Breast epithelium (tissue), 4 donors: ENCODE measurements at regions of chr9 and their contacts with region 1.

Region 1: GRCh38 chr9:33264473-33265177 is at the starts of genes BAG1 and CHMP5:
- DNase-seq: peak; percentile 99 to 100
- H3K4me3 ChIP-seq: peak within 1 kb of the TSS; percentile 97 to 98 (median 98)
- H3K27ac ChIP-seq: peak within 1 kb of the TSS; percentile 95
- H3K4me1 ChIP-seq: peaks cover 0 to 8% of the 10 kb centered on the region in 2 donors
- H3K27me3 ChIP-seq: no peaks in the 10 kb centered on the region
- CTCF ChIP-seq: peak in 1 of 3 donors; percentile 28
- POLR2A ChIP-seq: peak; percentile 8
- total RNA-seq, gene BAG1: 34.7 to 54.7 (median 44.9) TPM
- total RNA-seq, gene CHMP5: 63.1 to 73.4 (median 65.5) TPM

Region 2: DNA sequence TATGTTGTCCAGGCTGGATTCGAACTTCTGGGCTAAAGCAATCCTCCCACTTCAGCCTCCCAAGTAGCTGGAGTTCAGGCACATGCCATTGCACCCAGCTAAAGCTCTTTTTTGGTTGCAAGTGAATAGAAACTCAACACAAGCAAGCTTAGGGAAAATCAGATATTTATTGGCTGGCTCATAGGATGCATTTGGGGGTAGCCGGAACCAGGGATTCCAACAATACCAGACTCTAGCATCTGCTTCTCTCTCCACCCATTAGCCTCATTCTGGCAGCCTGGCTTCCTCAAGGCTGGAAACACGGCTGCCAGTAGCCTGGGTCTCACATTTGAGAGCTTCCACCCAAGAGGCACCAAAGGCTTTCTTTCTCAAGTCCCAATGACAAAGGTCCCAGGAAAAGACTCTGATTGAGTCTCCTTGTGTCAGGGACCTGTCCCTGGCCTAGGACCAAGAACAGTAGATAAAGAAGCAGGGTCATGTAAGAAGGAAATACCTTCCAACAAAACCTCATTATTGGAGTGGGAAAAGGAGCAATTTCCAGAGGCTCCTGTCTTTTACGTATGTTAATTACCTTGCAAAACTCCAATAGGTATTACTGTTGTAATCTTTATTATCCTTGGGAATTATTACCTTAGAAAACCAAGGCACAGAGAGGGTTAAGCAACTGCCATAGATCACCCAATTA is 74.5 kb before region 1 on chr9:
- intact Hi-C with region 1: loop called (anchors 2 kb)
- DNase-seq: no peak
- H3K4me3 ChIP-seq: no peak overlapping the region
- H3K27ac ChIP-seq: no peak overlapping the region
- H3K4me1 ChIP-seq: no peaks in the 10 kb centered on the region
- H3K27me3 ChIP-seq: no peaks in the 10 kb centered on the region
- CTCF ChIP-seq: no peak
- POLR2A ChIP-seq: no peak